ENCODE measurements at regions of chr2 and their contacts with region 1.

Region 1: DNA sequence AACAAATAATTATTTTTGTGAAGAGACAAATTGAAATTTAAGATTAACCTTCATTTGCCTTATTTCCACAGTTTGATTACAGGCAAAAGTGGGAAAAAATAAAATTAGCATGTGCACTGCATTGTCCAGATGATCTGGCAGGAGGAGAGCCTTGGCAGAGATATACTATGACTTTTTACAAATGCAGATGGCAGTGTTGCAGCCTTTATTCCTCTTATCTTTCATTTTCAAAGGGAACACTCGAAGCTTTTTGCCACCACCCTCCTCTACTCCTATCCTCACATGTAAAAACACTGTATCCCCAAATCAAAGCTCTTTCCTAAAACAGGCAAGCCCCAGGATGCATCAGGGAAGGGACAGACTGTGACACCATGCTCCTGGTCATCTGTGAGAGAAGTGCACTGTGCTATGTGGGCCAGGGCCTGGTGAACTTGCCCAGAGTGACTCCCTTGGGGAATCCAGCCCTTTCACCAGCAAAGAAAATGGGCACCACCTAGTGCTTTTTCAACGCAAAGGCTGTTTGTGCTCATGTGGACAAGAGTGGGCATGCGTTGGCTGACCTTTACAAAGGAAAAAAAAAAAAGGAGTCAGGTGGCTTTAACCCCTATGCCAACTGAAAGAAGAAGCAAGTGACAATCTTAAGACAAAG is 74.7 kb upstream of the ETAA1 start:
- DNase-seq: peak; percentile 73
- H3K4me3 ChIP-seq: no peak overlapping the region
- H3K27ac ChIP-seq: no peak overlapping the region
- H3K4me1 ChIP-seq: peaks cover 3% of the 10 kb centered on the region
- H3K27me3 ChIP-seq: no peaks in the 10 kb centered on the region
- CTCF ChIP-seq: peak; percentile 82 to 87

Region 2: DNA sequence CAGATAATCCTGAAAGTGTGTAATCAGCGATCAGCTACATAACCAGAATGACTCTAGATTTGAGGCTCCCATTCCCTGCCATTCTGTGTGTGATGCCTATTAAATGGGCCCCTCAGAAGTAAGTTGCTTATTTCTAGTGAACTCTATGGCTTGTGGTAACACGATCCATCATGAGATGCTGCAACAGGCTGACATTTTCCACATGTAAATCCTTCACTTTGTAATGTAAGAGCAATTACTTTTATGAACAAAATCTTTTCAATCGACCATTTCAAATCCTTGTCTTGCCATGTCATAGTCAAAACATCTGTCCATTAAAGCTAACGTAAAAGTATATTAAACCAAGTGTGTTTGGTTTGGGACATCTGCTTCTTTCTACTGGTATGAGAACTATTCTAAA is 101.2 kb before region 1 on chr2:
- CTCF ChIA-PET with region 1: interaction called, 11 read pairs
- dilution Hi-C with region 1: no loop called
- in situ Hi-C with region 1: no loop called
- intact Hi-C with region 1: no loop called
- DNase-seq: no peak
- H3K4me3 ChIP-seq: no peak overlapping the region
- H3K27ac ChIP-seq: no peak overlapping the region
- H3K4me1 ChIP-seq: no peaks in the 10 kb centered on the region
- H3K27me3 ChIP-seq: no peaks in the 10 kb centered on the region
- CTCF ChIP-seq: no peak

Region 3: DNA sequence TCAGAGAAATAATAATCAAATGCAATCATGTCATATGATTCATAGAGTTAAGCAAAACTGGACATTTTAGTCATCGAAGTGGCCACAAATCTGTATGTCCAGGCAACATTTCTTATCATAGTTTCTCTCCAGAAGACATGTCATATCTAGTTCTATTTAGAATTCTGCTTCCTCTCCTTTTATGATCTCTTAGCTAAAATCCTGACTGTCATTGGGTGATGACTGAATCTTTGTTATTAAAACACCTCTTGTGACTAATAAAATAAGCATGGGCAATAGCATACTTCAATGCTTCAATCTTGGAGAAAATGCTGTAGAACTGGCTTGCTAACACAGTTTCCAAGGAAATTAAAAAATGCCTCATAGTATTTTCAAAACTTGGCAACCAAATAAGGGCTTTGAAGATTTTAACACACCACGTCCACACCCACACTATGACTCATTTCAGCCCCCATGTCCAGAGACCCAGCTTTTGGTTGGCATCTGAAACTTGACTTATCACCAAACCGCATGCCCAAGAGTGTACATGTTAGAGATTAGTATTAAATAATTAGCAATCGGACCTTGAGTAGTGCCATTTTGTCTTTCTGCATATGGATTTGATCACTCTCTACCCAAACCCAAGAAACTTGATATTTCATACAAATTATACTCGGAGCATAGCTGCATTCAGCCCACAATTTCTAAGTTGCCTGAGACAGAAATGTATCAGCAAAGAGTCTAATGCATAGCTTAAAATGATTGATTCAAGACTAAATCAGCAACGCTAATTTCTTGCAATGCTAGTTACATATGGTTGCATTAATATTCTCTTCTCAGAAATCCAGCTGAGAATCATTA is 31.8 kb before region 1 on chr2:
- CTCF ChIA-PET with region 1: no interaction called
- dilution Hi-C with region 1: no loop called
- in situ Hi-C with region 1: no loop called
- intact Hi-C with region 1: loop called (anchors 1 kb)
- DNase-seq: peak; percentile 98
- H3K4me3 ChIP-seq: no peak overlapping the region
- H3K27ac ChIP-seq: peak overlapping the region; percentile 97
- H3K4me1 ChIP-seq: peaks cover 23% of the 10 kb centered on the region
- H3K27me3 ChIP-seq: no peaks in the 10 kb centered on the region
- CTCF ChIP-seq: no peak

Region 4: GRCh38 chr2:67650291-67651133 is 328.0 kb after region 1 on chr2:
- CTCF ChIA-PET with region 1: no interaction called
- dilution Hi-C with region 1: no loop called
- in situ Hi-C with region 1: no loop called
- intact Hi-C with region 1: loop called (anchors 1 kb)
- DNase-seq: peak; percentile 67
- H3K4me3 ChIP-seq: no peak overlapping the region
- H3K27ac ChIP-seq: no peak overlapping the region
- H3K4me1 ChIP-seq: peaks cover 8% of the 10 kb centered on the region
- H3K27me3 ChIP-seq: no peaks in the 10 kb centered on the region
- CTCF ChIP-seq: peak; percentile 80 to 91

Measured in mammary epithelial cell (primary cell).